ENCODE measurements at regions of chr12 and their contacts with region 1.

Region 1: DNA sequence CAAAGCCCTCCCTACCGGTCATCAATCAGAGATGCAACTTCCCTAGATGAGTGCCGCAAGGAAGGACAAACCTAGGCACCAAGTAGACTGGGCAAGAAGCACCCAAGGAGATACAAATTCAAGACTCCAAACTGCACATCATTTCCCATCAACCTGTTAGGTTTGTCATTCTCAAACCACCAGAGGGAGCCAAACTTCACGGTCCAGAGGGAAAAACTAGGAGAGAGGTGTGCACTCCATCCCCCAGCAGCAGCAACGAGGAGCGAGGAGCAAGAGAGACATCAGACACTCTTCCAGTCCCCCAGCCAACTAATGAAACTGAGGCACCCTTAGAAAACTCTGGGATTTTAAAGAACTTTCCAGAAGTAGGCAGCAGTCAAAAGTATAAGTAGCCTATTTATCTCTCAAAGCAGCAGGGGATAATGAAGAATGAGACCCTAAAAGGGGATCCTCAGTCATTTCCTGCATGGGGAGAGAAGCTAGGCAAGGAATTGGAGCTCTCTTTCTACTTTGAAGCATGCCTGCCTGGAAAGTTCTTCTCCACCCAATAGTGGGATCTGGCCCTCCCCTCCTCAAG is 37.0 kb upstream of the NT5DC3 start:
- DNase-seq: no peak
- H3K4me3 ChIP-seq: no peak overlapping the region
- CTCF ChIP-seq: peak; percentile 78

Region 2: GRCh38 chr12:103626498-103626897 is 251.5 kb before region 1 on chr12:
- CTCF ChIA-PET with region 1: interaction called, 17 read pairs
- POLR2A ChIA-PET with region 1: no interaction called
- DNase-seq: peak; percentile 28
- H3K4me3 ChIP-seq: no peak overlapping the region
- CTCF ChIP-seq: peak; percentile 12

Region 3: GRCh38 chr12:103901518-103902173 is 23.6 kb after region 1 on chr12:
- CTCF ChIA-PET with region 1: interaction called, 33 read pairs
- POLR2A ChIA-PET with region 1: no interaction called
- DNase-seq: no peak
- H3K4me3 ChIP-seq: no peak overlapping the region
- CTCF ChIP-seq: no peak

Region 4: GRCh38 chr12:103930034-103930786 is 52.2 kb after region 1 on chr12 and contains the start of gene HSP90B1:
- CTCF ChIA-PET with region 1: interaction called, 10 read pairs
- POLR2A ChIA-PET with region 1: no interaction called
- DNase-seq: peak; percentile 99
- H3K4me3 ChIP-seq: peak within 1 kb of the TSS; percentile 91
- CTCF ChIP-seq: no peak